Dorsolateral prefrontal cortex (tissue), 120 donors: ENCODE measurements at regions of chr1 and their contacts with region 1.

Region 1: DNA sequence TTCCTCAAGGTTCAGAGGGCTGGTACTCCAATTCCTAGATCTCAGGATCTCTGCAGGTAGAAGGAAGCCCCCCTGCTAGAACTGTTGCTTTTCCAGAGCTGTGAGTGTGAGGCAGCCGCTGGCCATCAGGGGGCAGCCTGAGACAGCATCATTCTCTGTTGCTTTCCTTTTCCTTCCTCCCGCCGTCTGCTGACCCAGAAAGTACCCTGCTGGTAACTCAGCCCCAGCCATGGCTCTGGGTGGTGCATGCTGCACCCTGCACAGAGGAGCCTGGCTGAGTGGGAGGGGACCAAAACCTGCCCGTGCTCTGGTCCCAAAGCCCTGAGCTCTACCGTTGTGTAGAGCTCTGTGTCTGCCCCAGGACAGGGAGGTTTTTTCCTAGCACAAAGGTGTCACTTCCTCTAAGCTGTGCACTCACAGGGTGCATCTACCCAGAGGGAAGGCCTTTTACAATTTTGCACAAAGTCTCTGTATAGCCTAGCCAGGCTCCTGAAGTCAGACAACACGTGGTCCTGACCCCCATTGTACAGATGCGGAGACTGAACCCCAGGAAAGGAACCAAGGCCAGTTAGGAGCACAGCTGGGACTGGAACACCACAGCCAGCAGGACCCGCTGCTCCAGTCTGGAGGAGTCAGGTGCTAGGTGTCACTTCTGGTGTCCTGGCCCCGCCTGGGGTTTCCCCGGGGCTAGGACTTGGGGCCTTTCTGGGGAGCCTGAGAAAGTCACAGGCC is 5.6 kb upstream of the FAM131C start:
- DNase-seq: peak; percentile 67 to 85 (median 82)
- H3K4me3 ChIP-seq: peak overlapping the region in 7 of 59 donors; percentile 12 to 39 (median 31)
- H3K27ac ChIP-seq: peak overlapping the region in 6 of 59 donors; percentile 14 to 50 (median 36)
- H3K27me3 ChIP-seq: no peaks in the 10 kb centered on the region
- CTCF ChIP-seq: peak; percentile 70 to 97 (median 92)

Region 2: DNA sequence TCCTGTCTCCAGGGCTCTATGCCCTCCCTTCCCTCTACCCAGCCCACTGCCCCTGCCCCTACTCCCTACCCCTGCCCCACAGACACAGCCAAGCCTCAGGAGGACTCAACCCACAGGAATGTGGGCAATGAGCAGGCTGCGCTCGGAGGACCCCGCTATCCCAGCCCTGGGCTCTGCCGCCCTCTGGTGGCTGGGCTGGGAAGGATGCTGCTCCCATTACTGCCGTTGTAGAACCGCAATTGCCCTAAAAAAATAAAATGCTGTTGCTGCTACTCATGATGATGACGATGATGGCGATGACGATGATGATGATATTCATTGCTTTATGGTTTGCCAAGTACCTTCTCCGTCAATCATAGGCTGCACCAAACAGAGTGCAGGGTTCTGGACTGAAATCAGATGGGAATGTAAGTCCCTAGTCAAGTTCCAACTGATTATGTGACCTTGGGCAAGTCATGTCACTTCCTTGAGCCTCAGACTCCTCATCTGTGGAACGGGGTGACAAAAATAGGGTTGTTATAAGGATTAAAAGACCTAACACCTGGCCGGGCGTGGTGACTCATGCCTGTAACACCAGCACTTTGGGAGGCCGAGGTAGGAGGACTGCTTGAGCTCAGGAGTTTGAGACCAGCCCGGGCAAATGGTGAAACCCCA is 108.8 kb after region 1 on chr1:
- intact Hi-C with region 1: loop called (anchors 1 to 2 kb)
- DNase-seq: peak in 9 of 10 donors; percentile 37 to 81 (median 64)
- H3K4me3 ChIP-seq: no peak overlapping the region
- H3K27ac ChIP-seq: no peak overlapping the region
- H3K27me3 ChIP-seq: peaks cover 0 to 25% (median 2%) of the 10 kb centered on the region in 45 donors
- CTCF ChIP-seq: peak; percentile 58 to 97 (median 91)

Region 3: GRCh38 chr1:16243936-16244649 is 165.0 kb after region 1 on chr1:
- intact Hi-C with region 1: loop called (anchors 2 to 5 kb)
- DNase-seq: peak; percentile 51 to 85 (median 75)
- H3K4me3 ChIP-seq: no peak overlapping the region
- H3K27ac ChIP-seq: peak overlapping the region in 38 of 59 donors; percentile 2 to 75 (median 46)
- H3K27me3 ChIP-seq: no peaks in the 10 kb centered on the region
- CTCF ChIP-seq: peak; percentile 55 to 89 (median 82)